Psoas muscle (tissue), 8 donors: ENCODE measurements at regions of chr17 and their contacts with region 1.

Region 1: GRCh38 chr17:1331708-1332107 is 52.2 kb downstream of the TRARG1 start:
- DNase-seq: no peak
- ATAC-seq: peak in 1 of 4 donors; percentile 20
- H3K4me3 ChIP-seq: no peak overlapping the region
- H3K27ac ChIP-seq: no peak overlapping the region
- H3K4me1 ChIP-seq: peaks cover 3% of the 10 kb centered on the region
- H3K27me3 ChIP-seq: no peaks in the 10 kb centered on the region
- CTCF ChIP-seq: no peak

Region 2: DNA sequence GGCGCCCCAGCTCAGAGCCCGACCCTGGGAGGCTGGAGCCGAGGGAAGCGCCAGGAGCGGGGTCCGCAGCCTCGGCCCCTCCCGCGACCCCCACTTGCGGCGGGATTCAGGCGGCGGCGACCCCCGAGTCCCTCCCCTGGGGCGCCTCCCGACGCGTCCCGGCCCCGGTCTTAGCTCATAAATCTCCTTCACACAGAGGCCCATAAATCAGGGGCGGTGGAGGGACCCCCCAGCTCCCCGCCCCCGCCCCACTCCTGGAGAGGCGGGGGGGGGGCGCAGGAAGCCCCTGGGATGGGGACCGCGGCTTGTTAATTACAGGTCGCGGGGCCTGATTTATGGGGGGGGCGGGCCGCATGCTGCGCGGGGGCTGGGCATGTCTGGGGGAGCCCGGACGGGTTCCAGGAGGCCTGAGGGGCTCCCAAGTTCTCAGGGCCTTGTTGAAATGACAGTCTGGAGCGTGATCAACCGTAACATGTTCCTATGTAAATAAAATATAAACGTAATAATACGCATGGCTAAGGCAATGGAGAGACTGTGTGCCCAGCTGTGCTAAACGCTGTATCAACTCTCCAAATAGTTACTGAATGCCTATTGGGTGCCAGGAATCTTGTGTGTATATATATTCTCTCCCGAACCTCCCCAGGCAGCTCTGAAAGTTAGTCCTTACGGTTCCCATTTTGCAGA is 71.5 kb before region 1 on chr17:
- intact Hi-C with region 1: loop called in 1 of 2 experiments (anchors 5 kb)
- DNase-seq: no peak
- ATAC-seq: peak in 2 of 4 donors; percentile 10 to 15
- H3K4me3 ChIP-seq: peak overlapping the region; percentile 58
- H3K27ac ChIP-seq: no peak overlapping the region
- H3K4me1 ChIP-seq: peaks cover 8% of the 10 kb centered on the region
- H3K27me3 ChIP-seq: peaks cover 0 to 30% (median 0%) of the 10 kb centered on the region in 3 donors
- CTCF ChIP-seq: no peak

Region 3: GRCh38 chr17:1275962-1276736 is 55.6 kb before region 1 on chr17:
- intact Hi-C with region 1: loop called (anchors 5 kb)
- DNase-seq: peak; percentile 70 to 80
- ATAC-seq: peak; percentile 71 to 89 (median 80)
- H3K4me3 ChIP-seq: no peak overlapping the region
- H3K27ac ChIP-seq: no peak overlapping the region
- H3K4me1 ChIP-seq: no peaks in the 10 kb centered on the region
- H3K27me3 ChIP-seq: peaks cover under 1 to 36% (median 7%) of the 10 kb centered on the region in 3 donors
- CTCF ChIP-seq: peak; percentile 76